Activated B cell treated with CpG ODN at 0.5 μM for 24 hours (primary cell): ENCODE measurements at regions of chr1 and their contacts with region 1.

Region 1: GRCh38 chr1:194214735-194215134 is 1028.3 kb upstream of the B3GALT2 start:
- DNase-seq: no peak
- ATAC-seq: no peak
- H3K4me3 Mint-ChIP-seq: no peak overlapping the region
- H3K27ac Mint-ChIP-seq: no peak overlapping the region
- H3K4me1 Mint-ChIP-seq: no peaks in the 10 kb centered on the region
- H3K27me3 Mint-ChIP-seq: peaks cover 8% of the 10 kb centered on the region
- CTCF ChIP-seq: no peak

Region 2: DNA sequence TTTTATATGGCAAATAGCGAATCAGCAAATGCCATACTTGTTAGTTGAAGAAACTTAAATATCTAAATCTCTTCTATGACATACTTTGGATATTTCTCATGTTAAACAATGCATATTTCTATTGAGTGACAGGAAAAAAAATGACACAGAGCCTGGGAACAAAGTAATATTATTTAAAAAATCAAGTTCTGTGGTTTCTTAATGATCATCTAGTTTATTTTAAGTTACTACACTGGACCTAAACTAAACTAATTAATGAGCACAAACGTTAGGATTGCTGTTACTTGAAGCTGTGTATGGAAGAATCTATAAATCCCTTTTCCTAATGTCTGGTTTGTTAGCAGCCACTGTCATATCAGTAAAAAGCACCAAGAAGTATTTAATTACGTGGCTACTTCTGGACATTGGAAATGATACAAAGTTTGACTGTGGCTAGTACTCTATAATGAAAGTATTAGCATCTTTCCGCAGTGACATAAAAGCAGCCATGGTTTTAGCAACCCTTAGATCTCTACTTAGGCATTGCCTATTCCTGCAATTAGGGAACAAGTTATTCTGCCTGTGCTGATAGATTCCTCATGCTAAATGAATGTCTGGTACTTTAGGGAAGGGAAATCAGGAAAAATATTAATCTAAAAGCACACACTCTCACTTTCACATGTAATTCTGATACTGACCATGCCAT is 46.6 kb before region 1 on chr1:
- CTCF ChIA-PET with region 1: no interaction called
- POLR2A ChIA-PET with region 1: no interaction called
- intact Hi-C with region 1: no loop called
- DNase-seq: no peak
- ATAC-seq: no peak
- H3K4me3 Mint-ChIP-seq: no peak overlapping the region
- H3K27ac Mint-ChIP-seq: no peak overlapping the region
- H3K4me1 Mint-ChIP-seq: no peaks in the 10 kb centered on the region
- H3K27me3 Mint-ChIP-seq: no peaks in the 10 kb centered on the region
- CTCF ChIP-seq: no peak

Region 3: DNA sequence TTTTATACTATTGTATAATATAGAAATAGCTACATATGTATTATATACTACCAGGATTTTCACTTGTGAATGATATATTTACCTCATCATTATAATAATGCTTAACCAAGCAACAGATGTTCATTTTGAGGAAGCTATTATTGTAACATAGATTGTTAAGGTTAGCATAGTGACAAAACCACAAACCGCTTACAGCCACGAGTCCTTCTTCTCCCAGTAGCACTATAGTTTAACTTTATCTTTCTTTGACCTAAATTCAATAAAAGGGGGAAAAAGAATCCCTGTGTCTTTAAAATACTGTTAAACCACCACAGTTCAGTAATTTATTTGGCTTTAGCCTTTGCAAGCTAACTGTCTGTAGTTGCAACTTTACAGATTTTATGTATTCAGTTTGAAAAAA is 11.1 kb after region 1 on chr1:
- CTCF ChIA-PET with region 1: no interaction called
- POLR2A ChIA-PET with region 1: no interaction called
- intact Hi-C with region 1: loop called (anchors 2 kb)
- DNase-seq: no peak
- ATAC-seq: peak; percentile 57
- H3K4me3 Mint-ChIP-seq: no peak overlapping the region
- H3K27ac Mint-ChIP-seq: no peak overlapping the region
- H3K4me1 Mint-ChIP-seq: peaks cover 9% of the 10 kb centered on the region
- H3K27me3 Mint-ChIP-seq: peaks cover 11% of the 10 kb centered on the region
- CTCF ChIP-seq: no peak

Region 4: GRCh38 chr1:194268839-194269238 is 54.1 kb after region 1 on chr1:
- CTCF ChIA-PET with region 1: no interaction called
- POLR2A ChIA-PET with region 1: no interaction called
- intact Hi-C with region 1: no loop called
- DNase-seq: no peak
- ATAC-seq: no peak
- H3K4me3 Mint-ChIP-seq: no peak overlapping the region
- H3K27ac Mint-ChIP-seq: no peak overlapping the region
- H3K4me1 Mint-ChIP-seq: no peaks in the 10 kb centered on the region
- H3K27me3 Mint-ChIP-seq: peaks cover 13% of the 10 kb centered on the region
- CTCF ChIP-seq: no peak